ENCODE measurements at regions of chr5 and their contacts with region 1.

Region 1: GRCh38 chr5:112757468-112758208 is 20.0 kb downstream of the APC start:
- DNase-seq: no peak
- H3K4me3 ChIP-seq: no peak overlapping the region
- CTCF ChIP-seq: peak; percentile 56

Region 2: DNA sequence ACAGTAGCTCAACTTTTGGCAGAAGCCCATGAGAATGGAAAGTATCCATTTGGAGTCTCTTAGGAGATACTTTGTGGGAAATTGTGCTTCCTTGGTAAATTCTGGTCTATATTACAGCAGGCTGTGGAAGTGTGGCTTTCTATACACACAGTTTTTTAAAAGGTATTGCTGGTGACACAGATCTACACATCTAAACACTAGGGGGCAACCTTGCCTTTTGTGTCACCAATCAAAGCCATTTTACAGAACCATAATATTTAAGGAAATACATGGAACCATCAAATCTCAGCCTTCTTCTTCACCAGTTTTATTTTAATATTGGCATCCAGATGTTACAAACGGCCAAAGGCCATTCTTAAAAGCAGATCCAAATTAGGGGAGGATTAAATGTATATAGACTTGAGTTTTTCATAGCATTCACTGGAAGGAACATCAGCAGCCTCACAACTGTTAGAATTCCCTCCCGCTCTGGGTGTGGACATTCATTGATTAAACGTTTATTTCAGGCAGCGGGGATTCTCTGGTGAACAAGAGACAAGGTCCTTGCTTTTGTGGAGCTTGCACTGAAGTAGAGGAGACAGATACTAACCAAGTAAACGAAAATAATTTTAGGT is 206.1 kb before region 1 on chr5:
- CTCF ChIA-PET with region 1: interaction called, 397 read pairs
- POLR2A ChIA-PET with region 1: interaction called, 3 read pairs
- DNase-seq: peak; percentile 10
- H3K4me3 ChIP-seq: no peak overlapping the region
- CTCF ChIP-seq: peak; percentile 67

Region 3: DNA sequence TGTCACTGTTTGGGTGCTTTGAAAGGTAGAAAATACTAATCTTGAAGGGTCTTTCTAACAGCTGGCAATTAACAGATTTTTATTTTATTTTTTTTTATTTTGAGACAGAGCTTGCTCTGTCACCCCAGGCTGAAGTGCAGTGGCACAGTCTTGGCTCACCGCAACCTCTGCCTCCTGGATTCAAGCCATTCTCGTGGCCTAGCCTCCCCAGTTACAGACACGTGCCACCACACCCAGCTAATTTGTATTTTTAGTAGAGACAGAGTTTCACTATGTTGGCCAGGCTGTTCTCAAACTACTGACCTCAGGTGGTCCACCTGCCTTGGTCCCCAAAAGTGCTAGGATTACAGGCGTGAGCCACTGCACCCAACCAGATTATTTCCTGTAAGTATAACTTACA is 32.7 kb before region 1 on chr5:
- CTCF ChIA-PET with region 1: interaction called, 10 read pairs
- POLR2A ChIA-PET with region 1: no interaction called
- DNase-seq: no peak
- H3K4me3 ChIP-seq: no peak overlapping the region
- CTCF ChIP-seq: no peak

Region 4: DNA sequence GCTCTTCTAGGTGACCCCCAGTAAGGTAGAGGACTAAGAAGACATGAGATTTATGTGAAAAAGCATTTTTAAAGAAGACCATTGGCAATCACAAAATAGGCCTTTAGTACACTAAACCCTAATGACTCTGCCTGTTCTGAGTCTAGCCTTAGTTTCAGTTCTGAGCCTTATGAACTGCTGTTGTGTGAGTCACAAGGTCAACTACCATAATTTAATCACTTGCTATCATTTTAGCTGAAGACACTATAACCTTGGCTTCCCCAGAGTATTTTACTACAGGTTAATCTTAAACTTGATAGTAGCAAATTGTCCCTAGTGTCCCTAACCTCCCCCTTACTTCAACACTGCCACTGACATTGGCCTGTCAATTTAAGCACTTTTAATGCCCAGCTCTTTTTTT is 14.5 kb after region 1 on chr5:
- CTCF ChIA-PET with region 1: interaction called, 19 read pairs
- POLR2A ChIA-PET with region 1: interaction called, 3 read pairs
- DNase-seq: no peak
- H3K4me3 ChIP-seq: no peak overlapping the region
- CTCF ChIP-seq: no peak

Region 5: GRCh38 chr5:112795944-112796678 is 38.5 kb after region 1 on chr5:
- CTCF ChIA-PET with region 1: no interaction called
- POLR2A ChIA-PET with region 1: no interaction called
- DNase-seq: no peak
- H3K4me3 ChIP-seq: no peak overlapping the region
- CTCF ChIP-seq: no peak